Gastrocnemius medialis (tissue), 4 donors: ENCODE measurements at regions of chr1 and their contacts with region 1.

Region 1: GRCh38 chr1:70134148-70134547 is 71.2 kb downstream of the LRRC40 start:
- DNase-seq: peak; percentile 39 to 62
- ATAC-seq: peak; percentile 96 to 98
- H3K4me3 ChIP-seq: no peak overlapping the region
- H3K27ac ChIP-seq: peak overlapping the region; percentile 81 to 89 (median 84)
- H3K4me1 ChIP-seq: peaks cover 17 to 21% of the 10 kb centered on the region in 2 donors
- H3K27me3 ChIP-seq: no peaks in the 10 kb centered on the region
- CTCF ChIP-seq: no peak
- POLR2A ChIP-seq: no peak

Region 2: DNA sequence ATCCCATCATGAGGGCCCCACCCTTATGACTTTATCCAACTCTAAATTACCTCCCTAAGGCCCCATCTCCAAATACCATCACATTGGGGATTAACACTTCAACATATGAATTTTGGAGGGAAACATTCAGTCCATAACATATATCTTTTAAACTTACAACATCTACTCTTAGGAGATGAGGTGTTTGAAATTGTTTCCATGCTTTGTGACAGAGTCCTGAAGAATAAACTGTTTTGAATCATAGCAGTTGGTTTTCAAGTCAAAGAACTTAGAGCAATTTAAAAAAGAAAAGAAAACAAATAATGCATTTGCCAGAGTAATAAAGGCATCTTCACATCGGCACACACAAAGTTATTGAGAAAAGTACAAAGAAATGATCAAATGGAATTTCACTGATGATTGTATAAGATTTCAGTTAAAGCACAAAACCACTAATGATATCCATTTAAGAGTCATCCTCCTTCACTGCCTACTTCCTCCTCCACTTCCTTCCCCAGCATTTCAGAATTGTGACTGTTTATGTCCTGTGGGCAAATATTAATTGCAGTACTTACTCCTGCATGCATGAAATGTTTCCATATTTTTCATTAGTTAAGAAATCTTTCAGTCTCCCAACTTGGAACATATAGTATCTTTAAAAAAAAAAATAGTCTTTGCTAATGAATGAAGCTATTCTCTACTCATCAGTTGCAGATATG is 130.8 kb before region 1 on chr1:
- in situ Hi-C with region 1: no loop called
- intact Hi-C with region 1: no loop called
- DNase-seq: no peak
- ATAC-seq: no peak
- H3K4me3 ChIP-seq: no peak overlapping the region
- H3K27ac ChIP-seq: no peak overlapping the region
- H3K4me1 ChIP-seq: no peaks in the 10 kb centered on the region
- H3K27me3 ChIP-seq: no peaks in the 10 kb centered on the region
- CTCF ChIP-seq: no peak
- POLR2A ChIP-seq: no peak

Region 3: GRCh38 chr1:70290218-70290617 is 156.1 kb after region 1 on chr1:
- in situ Hi-C with region 1: no loop called
- intact Hi-C with region 1: no loop called
- DNase-seq: no peak
- ATAC-seq: no peak
- H3K4me3 ChIP-seq: no peak overlapping the region
- H3K27ac ChIP-seq: no peak overlapping the region
- H3K4me1 ChIP-seq: no peaks in the 10 kb centered on the region
- H3K27me3 ChIP-seq: no peaks in the 10 kb centered on the region
- CTCF ChIP-seq: no peak
- POLR2A ChIP-seq: no peak

Region 4: DNA sequence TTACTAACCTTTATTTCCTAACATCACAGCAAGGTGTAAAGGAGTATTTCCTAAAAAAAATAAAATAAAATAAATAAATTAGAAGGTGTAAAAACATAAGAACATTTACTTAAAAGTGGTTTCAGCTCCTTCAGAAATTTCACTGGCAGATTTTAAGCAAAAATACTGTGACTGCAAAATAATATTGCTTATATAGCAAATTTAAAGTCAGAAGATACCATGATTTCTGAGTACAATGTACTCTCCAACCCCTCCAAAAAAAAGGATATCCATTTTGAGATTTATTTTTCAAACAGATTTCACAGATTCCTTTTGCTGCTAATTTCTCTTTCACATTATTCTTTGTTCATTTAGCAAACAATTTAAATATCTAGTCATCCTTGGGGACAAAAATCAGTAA is 201.9 kb after region 1 on chr1:
- in situ Hi-C with region 1: no loop called
- intact Hi-C with region 1: no loop called
- DNase-seq: no peak
- ATAC-seq: no peak
- H3K4me3 ChIP-seq: no peak overlapping the region
- H3K27ac ChIP-seq: no peak overlapping the region
- H3K4me1 ChIP-seq: peaks cover 3 to 4% of the 10 kb centered on the region in 2 donors
- H3K27me3 ChIP-seq: no peaks in the 10 kb centered on the region
- CTCF ChIP-seq: no peak
- POLR2A ChIP-seq: no peak

Region 5: DNA sequence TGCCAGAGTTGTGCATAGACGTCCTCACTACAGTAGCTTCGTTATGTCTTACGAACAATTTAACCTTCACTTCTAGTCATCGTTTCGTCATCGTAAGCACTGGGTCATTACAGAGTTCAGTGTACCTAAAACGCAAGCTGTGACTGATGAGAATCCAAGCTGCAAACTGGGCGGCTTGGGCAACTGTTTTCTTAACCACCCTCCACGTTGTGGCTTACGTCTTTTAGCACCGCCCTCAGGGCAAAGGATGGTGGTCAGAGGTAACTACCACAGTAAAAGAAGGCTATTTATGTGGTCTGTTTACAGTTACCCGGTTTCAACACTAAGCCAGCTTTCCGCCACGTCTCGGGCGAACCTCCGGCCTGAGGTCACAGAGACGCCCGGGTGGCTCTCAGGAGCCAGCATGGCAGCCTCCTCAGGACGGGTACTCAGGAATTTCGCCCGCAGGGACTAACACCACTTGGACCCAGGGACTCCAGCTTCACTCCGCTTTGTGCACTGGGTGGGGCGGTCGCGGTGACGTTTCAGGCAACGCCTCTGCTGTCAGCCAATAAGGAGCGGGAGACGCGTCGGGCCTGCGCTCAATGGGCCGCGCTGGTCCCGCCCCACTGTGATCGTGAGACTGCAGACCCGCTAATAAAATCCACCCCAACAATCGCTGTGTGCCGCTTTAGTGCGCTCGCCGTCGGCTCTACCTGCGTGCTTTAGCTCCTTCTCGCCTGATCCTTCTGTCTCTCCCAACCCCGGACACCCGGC is 276.6 kb after region 1 on chr1 and contains the start of gene CTH:
- in situ Hi-C with region 1: no loop called
- intact Hi-C with region 1: loop called (anchors 5 kb)
- DNase-seq: peak; percentile 97
- ATAC-seq: peak; percentile 92 to 95
- H3K4me3 ChIP-seq: peak within 1 kb of the TSS; percentile 67 to 85 (median 82)
- H3K27ac ChIP-seq: peak within 1 kb of the TSS; percentile 87 to 98 (median 97)
- H3K4me1 ChIP-seq: peaks cover 14 to 19% of the 10 kb centered on the region in 2 donors
- H3K27me3 ChIP-seq: no peaks in the 10 kb centered on the region
- CTCF ChIP-seq: peak in 1 of 5 experiments; percentile 18
- POLR2A ChIP-seq: peak; percentile 95 to 97
- total RNA-seq, gene CTH: 1.3 to 6.9 (median 2.5) TPM

Region 6: DNA sequence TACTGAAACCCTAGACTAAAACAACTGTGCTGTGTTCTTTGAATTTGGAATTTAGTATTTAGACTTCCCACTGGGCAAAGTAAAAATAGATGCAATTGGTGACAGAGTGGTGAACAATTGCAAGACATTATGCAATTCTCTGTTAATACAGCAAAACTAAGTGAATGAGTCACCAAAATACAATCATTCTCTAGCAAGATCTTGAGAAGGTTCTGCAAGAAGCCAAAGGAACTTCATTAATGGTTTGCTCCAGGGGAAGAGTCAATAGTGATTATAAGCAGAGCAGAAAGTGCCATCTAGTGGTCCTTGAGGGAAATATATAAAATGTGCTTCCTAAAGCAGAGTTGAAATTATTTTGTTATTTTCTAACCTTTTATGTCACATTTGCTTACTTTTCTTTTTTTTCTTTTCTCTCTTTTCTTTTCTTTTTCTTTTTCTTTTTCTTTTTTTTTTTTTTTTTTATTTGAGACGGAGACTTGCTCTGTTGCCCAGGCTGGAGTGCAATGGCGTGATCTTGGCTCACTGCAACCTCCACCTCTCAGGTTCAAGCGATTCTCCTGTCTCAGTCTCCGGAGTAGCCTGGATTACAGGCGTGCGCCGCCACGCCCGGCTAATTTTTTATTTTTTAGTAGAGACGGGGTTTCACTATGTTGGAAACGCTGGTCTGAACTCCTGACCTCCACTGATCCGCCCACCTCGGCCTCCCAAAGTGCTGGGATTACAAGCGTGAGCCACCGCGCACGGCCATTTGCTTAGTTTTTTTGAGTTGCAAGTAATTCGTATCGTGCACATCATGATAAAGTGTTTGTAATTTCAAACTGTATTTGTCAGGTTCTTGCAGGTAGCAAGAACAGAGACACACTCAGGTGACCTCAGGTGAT is 376.1 kb after region 1 on chr1:
- in situ Hi-C with region 1: loop called (anchors 5 to 10 kb)
- intact Hi-C with region 1: loop called (anchors 1 kb)
- DNase-seq: no peak
- ATAC-seq: peak; percentile 78 to 79
- H3K4me3 ChIP-seq: no peak overlapping the region
- H3K27ac ChIP-seq: no peak overlapping the region
- H3K4me1 ChIP-seq: no peaks in the 10 kb centered on the region
- H3K27me3 ChIP-seq: no peaks in the 10 kb centered on the region
- CTCF ChIP-seq: peak in 4 of 5 experiments; percentile 45 to 63 (median 57)
- POLR2A ChIP-seq: no peak

Region 7: DNA sequence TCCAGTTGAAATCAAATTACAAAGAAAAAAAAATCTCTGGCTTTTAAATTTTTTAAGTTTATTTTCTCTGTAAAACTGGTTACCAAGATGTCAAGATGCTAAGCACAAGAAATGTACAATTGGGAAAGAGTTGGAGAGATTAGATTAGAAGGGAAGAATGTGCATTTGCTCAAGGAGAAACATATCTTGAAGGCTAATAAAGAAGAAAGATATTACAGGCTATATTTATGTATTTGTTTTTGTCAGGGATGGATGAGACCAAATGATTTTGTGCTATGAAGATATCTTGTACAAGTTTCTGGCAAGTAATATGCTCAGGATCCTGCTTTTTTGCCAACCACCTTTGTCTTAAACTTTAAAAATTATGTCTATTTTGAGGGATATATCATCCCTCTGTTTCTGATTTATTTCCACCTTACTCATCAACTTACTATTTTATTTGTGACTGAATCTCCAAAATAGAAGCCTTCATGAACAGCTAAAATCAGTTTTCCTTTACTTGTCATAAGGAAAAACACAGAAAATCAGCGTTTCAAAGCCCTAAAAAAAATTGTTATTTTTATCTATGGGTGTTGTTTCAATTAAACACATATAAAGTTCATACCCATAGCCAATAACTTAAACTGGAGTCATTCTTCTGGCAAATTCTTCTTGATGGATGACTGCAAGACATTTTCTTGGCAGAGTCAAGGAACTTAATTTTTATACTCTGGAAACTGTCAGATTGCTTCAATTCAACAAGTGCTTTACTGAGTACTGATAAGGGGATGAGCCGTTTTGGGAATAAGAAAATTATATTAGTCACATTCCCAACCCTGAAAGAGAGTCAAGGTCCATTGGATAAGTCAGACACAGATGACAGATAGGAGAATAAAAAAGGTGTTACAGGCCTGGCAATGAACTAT is 418.8 kb after region 1 on chr1:
- in situ Hi-C with region 1: no loop called
- intact Hi-C with region 1: no loop called
- DNase-seq: no peak
- ATAC-seq: no peak
- H3K4me3 ChIP-seq: no peak overlapping the region
- H3K27ac ChIP-seq: no peak overlapping the region
- H3K4me1 ChIP-seq: no peaks in the 10 kb centered on the region
- H3K27me3 ChIP-seq: no peaks in the 10 kb centered on the region
- CTCF ChIP-seq: no peak
- POLR2A ChIP-seq: no peak